SK-N-SH (cell line): ENCODE measurements at regions of chr12 and their contacts with region 1.

Region 1: GRCh38 chr12:113427882-113428281 is 5.7 kb downstream of the SDSL start:
- DNase-seq: no peak
- H3K4me3 ChIP-seq: no peak overlapping the region
- H3K27ac ChIP-seq: no peak overlapping the region
- H3K4me1 ChIP-seq: peaks cover 0 to under 1% of the 10 kb centered on the region in 2 experiments; a peak in 1 of 4 replicates
- H3K27me3 ChIP-seq: no peaks in the 10 kb centered on the region
- CTCF ChIP-seq: no peak
- EP300 ChIP-seq: no peak
- RAD21 ChIP-seq: no peak

Region 2: GRCh38 chr12:113439606-113440030 is 11.7 kb after region 1 on chr12:
- CTCF ChIA-PET with region 1: interaction called, 19 read pairs
- POLR2A ChIA-PET with region 1: interaction called, 3 read pairs
- DNase-seq: peak; percentile 80
- H3K4me3 ChIP-seq: no peak overlapping the region
- H3K27ac ChIP-seq: no peak overlapping the region
- H3K4me1 ChIP-seq: no peaks in the 10 kb centered on the region
- H3K27me3 ChIP-seq: no peaks in the 10 kb centered on the region
- CTCF ChIP-seq: peak; percentile 72
- EP300 ChIP-seq: no peak
- RAD21 ChIP-seq: peak; percentile 76